ENCODE measurements at regions of chr16 and their contacts with region 1.

Region 1: GRCh38 chr16:57576429-57576870 is 34.0 kb downstream of the ADGRG5 start:
- DNase-seq: peak; percentile 93
- ATAC-seq: peak; percentile 72
- H3K4me3 Mint-ChIP-seq: peak overlapping the region; percentile 2
- H3K27ac Mint-ChIP-seq: peak overlapping the region; percentile 82
- H3K4me1 Mint-ChIP-seq: peaks cover 67% of the 10 kb centered on the region
- H3K27me3 Mint-ChIP-seq: no peaks in the 10 kb centered on the region

Region 2: GRCh38 chr16:57416122-57416509 is 160.3 kb before region 1 on chr16:
- CTCF ChIA-PET with region 1: interaction called, 10 read pairs
- POLR2A ChIA-PET with region 1: no interaction called
- DNase-seq: no peak
- ATAC-seq: no peak
- H3K4me3 Mint-ChIP-seq: no peak overlapping the region
- H3K27ac Mint-ChIP-seq: no peak overlapping the region
- H3K4me1 Mint-ChIP-seq: peaks cover 25% of the 10 kb centered on the region
- H3K27me3 Mint-ChIP-seq: no peaks in the 10 kb centered on the region

Region 3: GRCh38 chr16:57555831-57556230 is 20.6 kb before region 1 on chr16:
- CTCF ChIA-PET with region 1: interaction called, 15 read pairs
- POLR2A ChIA-PET with region 1: no interaction called
- DNase-seq: peak; percentile 9
- ATAC-seq: no peak
- H3K4me3 Mint-ChIP-seq: no peak overlapping the region
- H3K27ac Mint-ChIP-seq: no peak overlapping the region
- H3K4me1 Mint-ChIP-seq: peaks cover 32% of the 10 kb centered on the region
- H3K27me3 Mint-ChIP-seq: peaks cover 2% of the 10 kb centered on the region

Region 4: GRCh38 chr16:57609541-57610401 is 33.3 kb after region 1 on chr16:
- CTCF ChIA-PET with region 1: interaction called, 93 read pairs
- POLR2A ChIA-PET with region 1: interaction called, 13 read pairs
- DNase-seq: peak; percentile 84
- ATAC-seq: peak; percentile 95
- H3K4me3 Mint-ChIP-seq: peak overlapping the region; percentile 66
- H3K27ac Mint-ChIP-seq: peak overlapping the region; percentile 96
- H3K4me1 Mint-ChIP-seq: peaks cover 76% of the 10 kb centered on the region
- H3K27me3 Mint-ChIP-seq: no peaks in the 10 kb centered on the region

Region 5: GRCh38 chr16:57653936-57654335 is 77.5 kb after region 1 on chr16:
- CTCF ChIA-PET with region 1: interaction called, 244 read pairs
- POLR2A ChIA-PET with region 1: interaction called, 11 read pairs
- DNase-seq: no peak
- ATAC-seq: no peak
- H3K4me3 Mint-ChIP-seq: no peak overlapping the region
- H3K27ac Mint-ChIP-seq: no peak overlapping the region
- H3K4me1 Mint-ChIP-seq: peaks cover 45% of the 10 kb centered on the region
- H3K27me3 Mint-ChIP-seq: no peaks in the 10 kb centered on the region

Region 6: GRCh38 chr16:57734925-57735754 is 158.7 kb after region 1 on chr16:
- CTCF ChIA-PET with region 1: interaction called, 26 read pairs
- POLR2A ChIA-PET with region 1: no interaction called
- DNase-seq: peak; percentile 99
- ATAC-seq: peak; percentile 92
- H3K4me3 Mint-ChIP-seq: peak overlapping the region; percentile 90
- H3K27ac Mint-ChIP-seq: peak overlapping the region; percentile 94
- H3K4me1 Mint-ChIP-seq: peaks cover 33% of the 10 kb centered on the region
- H3K27me3 Mint-ChIP-seq: no peaks in the 10 kb centered on the region

Region 7: GRCh38 chr16:57892041-57892440 is 315.6 kb after region 1 on chr16:
- CTCF ChIA-PET with region 1: no interaction called
- POLR2A ChIA-PET with region 1: no interaction called
- DNase-seq: no peak
- ATAC-seq: no peak
- H3K4me3 Mint-ChIP-seq: no peak overlapping the region
- H3K27ac Mint-ChIP-seq: no peak overlapping the region
- H3K4me1 Mint-ChIP-seq: peaks cover 11% of the 10 kb centered on the region
- H3K27me3 Mint-ChIP-seq: peaks cover 36% of the 10 kb centered on the region